ENCODE measurements at regions of chr5 and their contacts with region 1.

Region 1: GRCh38 chr5:150398722-150399523 is 13.8 kb downstream of the CD74 start:
- DNase-seq: peak in 1 of 5 donors; percentile 59
- H3K4me3 ChIP-seq: no peak overlapping the region
- H3K4me3 Mint-ChIP-seq: no peak overlapping the region
- H3K27ac ChIP-seq: no peak overlapping the region
- H3K27ac Mint-ChIP-seq: peak overlapping the region; percentile 37 to 91 (median 78)
- H3K4me1 ChIP-seq: no peaks in the 10 kb centered on the region
- H3K4me1 Mint-ChIP-seq: peaks cover 3 to 41% (median 6%) of the 10 kb centered on the region in 3 donors
- H3K27me3 ChIP-seq: no peaks in the 10 kb centered on the region
- H3K27me3 Mint-ChIP-seq: peaks cover 0 to 4% of the 10 kb centered on the region in 2 donors

Region 2: GRCh38 chr5:150386024-150386864 is 12.7 kb before region 1 on chr5:
- CTCF ChIA-PET with region 1: interaction called, 10 read pairs
- POLR2A ChIA-PET with region 1: no interaction called
- DNase-seq: no peak
- H3K4me3 ChIP-seq: no peak overlapping the region
- H3K4me3 Mint-ChIP-seq: no peak overlapping the region
- H3K27ac ChIP-seq: no peak overlapping the region
- H3K27ac Mint-ChIP-seq: peak overlapping the region in 3 of 8 donors; percentile 56 to 84 (median 72)
- H3K4me1 ChIP-seq: no peaks in the 10 kb centered on the region
- H3K4me1 Mint-ChIP-seq: peaks cover 4 to 6% (median 5%) of the 10 kb centered on the region in 3 donors
- H3K27me3 ChIP-seq: no peaks in the 10 kb centered on the region
- H3K27me3 Mint-ChIP-seq: no peaks in the 10 kb centered on the region

Region 3: DNA sequence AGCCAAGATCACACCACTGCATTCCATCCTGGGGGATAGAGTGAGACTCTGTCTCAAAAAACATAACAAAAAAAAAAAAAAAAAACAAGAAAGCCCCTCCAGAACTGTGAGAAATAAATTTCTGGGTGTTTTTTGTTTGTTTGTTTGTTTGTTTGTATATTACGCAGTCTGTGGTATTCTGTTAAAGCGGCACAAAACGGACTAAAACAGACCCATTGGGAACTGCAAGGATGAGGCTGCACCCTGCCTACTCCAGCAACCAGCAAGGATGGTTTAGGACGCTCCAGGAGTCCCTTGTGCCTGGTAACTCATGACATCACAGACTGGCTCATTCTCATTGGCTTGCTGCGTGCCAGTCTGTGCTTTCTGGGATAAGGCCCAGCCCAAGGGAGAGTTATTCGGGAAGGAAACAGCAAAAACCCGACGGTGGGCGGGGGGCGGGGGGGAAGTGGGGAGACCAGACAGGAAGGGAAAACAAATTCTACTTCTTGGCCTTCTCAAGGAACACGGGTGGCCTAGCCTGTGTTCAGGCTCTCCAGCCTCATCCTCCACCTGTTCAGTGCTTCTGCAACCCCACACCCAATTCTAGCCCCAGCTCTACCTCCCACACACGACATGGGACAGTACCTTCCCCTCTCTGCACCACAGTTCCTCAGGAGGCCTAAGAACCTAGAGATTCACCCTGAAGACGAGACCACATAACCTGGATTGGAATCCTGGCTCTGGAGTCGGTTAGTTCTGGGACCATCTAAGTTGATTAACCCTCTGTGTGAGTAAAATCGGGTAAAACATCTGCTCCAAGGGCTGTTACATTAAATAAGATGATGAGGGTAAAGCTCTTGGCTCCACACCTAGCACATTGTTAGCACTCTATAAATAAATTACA is 11.0 kb after region 1 on chr5:
- CTCF ChIA-PET with region 1: interaction called, 31 read pairs
- POLR2A ChIA-PET with region 1: interaction called, 9 read pairs
- DNase-seq: peak; percentile 26 to 73 (median 45)
- H3K4me3 ChIP-seq: peak overlapping the region; percentile 96
- H3K4me3 Mint-ChIP-seq: peak overlapping the region; percentile 96 to 99 (median 97)
- H3K27ac ChIP-seq: peak overlapping the region; percentile 96
- H3K27ac Mint-ChIP-seq: peak overlapping the region; percentile 98 to 100 (median 100)
- H3K4me1 ChIP-seq: peaks cover 46% of the 10 kb centered on the region
- H3K4me1 Mint-ChIP-seq: peaks cover 41 to 66% (median 46%) of the 10 kb centered on the region in 3 donors
- H3K27me3 ChIP-seq: no peaks in the 10 kb centered on the region
- H3K27me3 Mint-ChIP-seq: peaks cover 0 to 1% of the 10 kb centered on the region in 2 donors

Region 4: GRCh38 chr5:150436141-150436680 is 37.3 kb after region 1 on chr5:
- CTCF ChIA-PET with region 1: interaction called, 12 read pairs
- POLR2A ChIA-PET with region 1: no interaction called
- DNase-seq: peak; percentile 80 to 91 (median 85)
- H3K4me3 ChIP-seq: no peak overlapping the region
- H3K4me3 Mint-ChIP-seq: peak overlapping the region in 6 of 7 donors; percentile 39 to 76 (median 62)
- H3K27ac ChIP-seq: no peak overlapping the region
- H3K27ac Mint-ChIP-seq: peak overlapping the region; percentile 8 to 94 (median 76)
- H3K4me1 ChIP-seq: peaks cover 3% of the 10 kb centered on the region
- H3K4me1 Mint-ChIP-seq: peaks cover 7 to 10% (median 8%) of the 10 kb centered on the region in 3 donors
- H3K27me3 ChIP-seq: no peaks in the 10 kb centered on the region
- H3K27me3 Mint-ChIP-seq: peaks cover 0 to 2% of the 10 kb centered on the region in 2 donors

Region 5: GRCh38 chr5:150484964-150485769 is 86.2 kb after region 1 on chr5:
- CTCF ChIA-PET with region 1: no interaction called
- POLR2A ChIA-PET with region 1: no interaction called
- DNase-seq: no peak
- H3K4me3 ChIP-seq: no peak overlapping the region
- H3K4me3 Mint-ChIP-seq: peak overlapping the region; percentile 65 to 86 (median 82)
- H3K27ac ChIP-seq: no peak overlapping the region
- H3K27ac Mint-ChIP-seq: peak overlapping the region in 5 of 8 donors; percentile 25 to 63 (median 52)
- H3K4me1 ChIP-seq: peaks cover 5% of the 10 kb centered on the region
- H3K4me1 Mint-ChIP-seq: peaks cover 7 to 13% (median 13%) of the 10 kb centered on the region in 3 donors
- H3K27me3 ChIP-seq: peaks cover 4% of the 10 kb centered on the region
- H3K27me3 Mint-ChIP-seq: peaks cover 12 to 32% of the 10 kb centered on the region in 2 donors

Measured in CD8-positive, alpha-beta memory T cell (primary cell).